Natural killer cell (primary cell): ENCODE measurements at regions of chr3 and their contacts with region 1.

Region 1: DNA sequence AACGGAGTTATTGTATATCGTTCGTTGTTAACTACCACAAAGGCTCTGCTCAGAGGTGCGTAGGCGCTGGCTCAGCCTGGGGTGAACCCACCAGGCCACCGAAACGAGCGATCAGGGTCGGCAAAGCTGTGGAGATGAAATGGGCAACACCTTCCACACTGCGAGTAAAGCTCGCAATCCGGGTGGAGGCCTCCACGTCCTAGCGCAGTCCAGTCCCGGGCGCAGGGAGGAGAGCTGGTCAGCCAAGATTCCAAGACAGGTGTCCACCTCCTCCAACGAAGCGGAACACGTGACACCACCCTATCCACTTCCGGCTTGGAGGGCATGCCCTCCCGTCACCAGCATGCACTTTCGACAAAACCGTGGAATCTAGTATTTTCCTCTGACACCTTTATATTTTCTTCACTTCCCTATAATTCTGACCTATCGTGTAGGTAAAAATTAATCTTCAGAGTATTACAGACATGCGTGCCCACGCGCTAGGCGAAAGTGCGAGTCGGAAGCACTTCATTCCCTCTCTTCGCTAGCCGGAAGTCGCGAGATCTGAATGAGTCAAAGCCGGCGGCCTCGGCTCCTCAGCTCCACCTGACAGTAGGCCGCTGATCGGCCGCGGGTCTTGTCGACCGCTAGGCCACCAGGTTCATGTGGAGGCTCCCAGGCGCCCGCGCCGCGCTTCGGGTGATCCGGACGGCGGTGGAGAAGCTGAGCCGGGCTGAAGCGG is at the start of gene PDE12:
- DNase-seq: peak; percentile 84 to 90
- ATAC-seq: peak; percentile 78 to 88 (median 82)
- H3K4me3 ChIP-seq: peak within 1 kb of the TSS; percentile 76
- H3K4me3 Mint-ChIP-seq: peak within 1 kb of the TSS; percentile 90
- H3K27ac ChIP-seq: peak within 1 kb of the TSS; percentile 94
- H3K27ac Mint-ChIP-seq: peak within 1 kb of the TSS; percentile 93 to 94
- H3K4me1 ChIP-seq: peaks cover 33% of the 10 kb centered on the region
- H3K4me1 Mint-ChIP-seq: peaks cover 42 to 44% of the 10 kb centered on the region in 2 donors
- H3K27me3 ChIP-seq: no peaks in the 10 kb centered on the region
- H3K27me3 Mint-ChIP-seq: no peaks in the 10 kb centered on the region
- CTCF ChIP-seq: no peak
- total RNA-seq, gene PDE12: 34.4 to 36.6 (median 35.5) TPM

Region 2: GRCh38 chr3:56862352-56863074 is 693.4 kb before region 1 on chr3:
- intact Hi-C with region 1: no loop called
- DNase-seq: no peak
- ATAC-seq: no peak
- H3K4me3 ChIP-seq: no peak overlapping the region
- H3K4me3 Mint-ChIP-seq: no peak overlapping the region
- H3K27ac ChIP-seq: no peak overlapping the region
- H3K27ac Mint-ChIP-seq: no peak overlapping the region
- H3K4me1 ChIP-seq: peaks cover 21% of the 10 kb centered on the region
- H3K4me1 Mint-ChIP-seq: peaks cover 33 to 39% of the 10 kb centered on the region in 2 donors
- H3K27me3 ChIP-seq: no peaks in the 10 kb centered on the region
- H3K27me3 Mint-ChIP-seq: no peaks in the 10 kb centered on the region
- CTCF ChIP-seq: no peak

Region 3: DNA sequence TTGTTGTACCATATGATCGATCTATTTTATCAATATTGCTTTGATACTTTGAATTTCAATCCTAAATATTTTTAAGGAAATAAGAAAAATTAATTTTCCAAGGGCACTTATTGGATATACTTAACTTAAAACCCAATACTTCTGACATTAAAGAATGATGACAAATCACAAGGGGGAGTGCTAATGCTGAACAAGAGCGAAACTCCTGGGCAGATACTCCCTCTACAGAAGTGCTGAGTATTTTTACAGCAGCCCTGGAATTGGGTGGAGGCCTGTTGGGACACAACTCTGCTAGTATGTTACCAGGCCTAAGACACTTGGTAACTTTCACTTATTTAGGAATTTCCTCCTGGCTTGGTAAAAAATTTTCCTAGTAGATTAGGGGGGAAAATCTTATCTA is 90.8 kb after region 1 on chr3:
- intact Hi-C with region 1: no loop called
- DNase-seq: peak in 1 of 2 donors; percentile 44
- ATAC-seq: peak in 2 of 3 donors; percentile 57 to 60
- H3K4me3 ChIP-seq: no peak overlapping the region
- H3K4me3 Mint-ChIP-seq: no peak overlapping the region
- H3K27ac ChIP-seq: no peak overlapping the region
- H3K27ac Mint-ChIP-seq: peak overlapping the region; percentile 67 to 70
- H3K4me1 ChIP-seq: no peaks in the 10 kb centered on the region
- H3K4me1 Mint-ChIP-seq: peaks cover 16 to 28% of the 10 kb centered on the region in 2 donors
- H3K27me3 ChIP-seq: no peaks in the 10 kb centered on the region
- H3K27me3 Mint-ChIP-seq: no peaks in the 10 kb centered on the region
- CTCF ChIP-seq: no peak

Region 4: GRCh38 chr3:57692259-57693147 is 136.6 kb after region 1 on chr3 and contains the start of gene DENND6A:
- intact Hi-C with region 1: loop called (anchors 5 kb)
- DNase-seq: peak; percentile 93 to 98
- ATAC-seq: peak; percentile 76 to 90 (median 80)
- H3K4me3 ChIP-seq: peak within 1 kb of the TSS; percentile 60
- H3K4me3 Mint-ChIP-seq: peak within 1 kb of the TSS; percentile 95
- H3K27ac ChIP-seq: peak within 1 kb of the TSS; percentile 88
- H3K27ac Mint-ChIP-seq: peak within 1 kb of the TSS; percentile 94 to 97
- H3K4me1 ChIP-seq: peaks cover 40% of the 10 kb centered on the region
- H3K4me1 Mint-ChIP-seq: peaks cover 22 to 38% of the 10 kb centered on the region in 2 donors
- H3K27me3 ChIP-seq: no peaks in the 10 kb centered on the region
- H3K27me3 Mint-ChIP-seq: no peaks in the 10 kb centered on the region
- CTCF ChIP-seq: no peak
- total RNA-seq, gene DENND6A: 54.5 to 69.8 (median 57.1) TPM

Region 5: DNA sequence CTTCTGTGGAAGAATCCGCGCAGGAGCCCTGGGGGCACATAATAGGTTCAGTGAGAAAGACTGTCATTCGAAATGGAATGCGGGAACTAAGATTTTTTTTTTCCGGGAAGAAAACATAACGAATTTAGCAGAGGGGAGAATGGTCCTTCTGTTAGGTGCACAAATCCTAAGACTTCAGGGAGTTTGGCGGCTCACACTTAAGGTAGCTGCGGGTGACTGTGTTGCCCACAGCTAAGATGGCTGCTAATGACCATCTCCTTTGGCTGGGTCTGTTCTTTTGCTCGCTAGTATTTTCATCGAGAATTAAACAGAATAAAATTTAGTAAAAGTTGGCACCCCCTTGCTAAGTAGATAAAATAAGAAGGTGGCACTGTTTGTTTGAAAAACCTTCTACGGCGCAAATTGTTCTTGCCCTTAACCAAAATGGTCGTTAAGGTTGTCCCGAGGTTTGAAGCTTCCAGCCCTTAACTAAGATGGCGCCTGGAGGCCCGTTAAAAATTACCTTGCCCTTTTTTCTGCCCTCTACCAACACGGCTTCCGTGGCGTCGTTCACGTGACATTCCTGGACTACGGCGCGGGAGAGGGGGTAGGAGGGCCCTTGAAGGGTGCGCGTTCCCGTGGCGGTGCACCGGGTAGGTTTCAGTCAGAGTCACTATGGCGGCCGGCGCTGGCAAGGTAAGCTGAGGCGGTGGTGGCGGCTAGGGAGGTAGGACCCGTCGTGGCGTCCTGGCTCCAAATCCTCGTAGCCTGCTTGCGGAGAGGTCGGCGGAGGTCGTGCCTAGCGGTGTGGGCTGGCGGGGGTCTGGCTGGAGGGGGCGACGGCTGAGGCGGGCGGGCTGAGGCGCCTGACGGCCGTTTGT is 200.0 kb after region 1 on chr3 and contains the start of gene SLMAP:
- intact Hi-C with region 1: loop called (anchors 1 kb)
- DNase-seq: peak; percentile 91 to 98
- ATAC-seq: peak; percentile 92 to 98 (median 93)
- H3K4me3 ChIP-seq: peak within 1 kb of the TSS; percentile 81
- H3K4me3 Mint-ChIP-seq: peak within 1 kb of the TSS; percentile 97
- H3K27ac ChIP-seq: peak within 1 kb of the TSS; percentile 79
- H3K27ac Mint-ChIP-seq: peak within 1 kb of the TSS; percentile 89 to 91
- H3K4me1 ChIP-seq: peaks cover 26% of the 10 kb centered on the region
- H3K4me1 Mint-ChIP-seq: peaks cover 27 to 28% of the 10 kb centered on the region in 2 donors
- H3K27me3 ChIP-seq: no peaks in the 10 kb centered on the region
- H3K27me3 Mint-ChIP-seq: no peaks in the 10 kb centered on the region
- CTCF ChIP-seq: no peak
- total RNA-seq, gene SLMAP: 79.4 to 98.6 (median 89.0) TPM